Activated naive CD4-positive, alpha-beta T cell treated with anti-CD3 and anti-CD28 coated beads for 36 hours (primary cell): ENCODE measurements at regions of chr11 and their contacts with region 1.

Region 1: DNA sequence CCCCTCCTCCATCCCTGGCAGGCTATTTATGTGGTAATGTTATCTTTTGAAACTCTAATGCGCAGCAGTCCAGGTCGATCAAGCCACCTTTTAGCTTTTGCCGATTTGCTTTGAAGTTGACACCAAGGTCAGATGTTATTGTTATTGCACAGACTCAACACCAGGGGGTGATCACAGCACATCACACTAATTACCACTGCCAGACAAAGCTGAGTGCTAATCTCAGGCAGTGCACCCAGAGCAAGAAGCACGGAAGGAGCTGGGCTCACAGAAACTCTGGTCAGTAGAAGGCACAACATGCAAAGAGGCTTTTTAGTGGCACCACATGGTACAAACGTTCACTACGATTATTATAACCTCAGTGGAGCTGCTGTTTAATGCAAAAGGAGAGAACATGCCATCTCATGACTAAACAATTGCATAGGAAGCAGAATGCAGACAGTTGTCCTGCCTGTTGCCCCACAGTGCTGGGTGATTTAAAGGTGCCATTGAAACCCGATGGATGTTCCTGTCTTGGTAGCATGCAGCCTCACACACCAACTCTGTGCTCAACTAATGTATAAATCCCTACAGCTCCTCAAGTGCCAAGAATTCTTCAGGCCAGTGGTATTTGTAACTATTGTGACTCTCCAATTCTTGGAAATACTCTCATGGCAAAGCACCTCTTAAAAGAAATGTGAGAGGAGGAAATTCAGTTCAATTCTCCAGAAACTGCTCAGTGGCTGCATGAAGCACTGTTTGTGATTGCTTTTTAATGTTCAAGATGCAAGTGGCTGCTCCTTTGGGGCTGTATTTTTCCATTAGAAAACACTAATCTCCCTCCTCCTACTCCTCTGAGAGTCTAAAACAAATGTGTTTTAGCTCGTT is 353.9 kb upstream of the DDI1 start:
- DNase-seq: peak; percentile 57
- H3K4me3 Mint-ChIP-seq: no peak overlapping the region
- H3K27ac Mint-ChIP-seq: no peak overlapping the region
- H3K4me1 Mint-ChIP-seq: peaks cover 2% of the 10 kb centered on the region
- H3K27me3 Mint-ChIP-seq: no peaks in the 10 kb centered on the region

Region 2: GRCh38 chr11:104151404-104152204 is 469.1 kb after region 1 on chr11:
- CTCF ChIA-PET with region 1: no interaction called
- intact Hi-C with region 1: loop called (anchors 1 kb)
- DNase-seq: no peak
- H3K4me3 Mint-ChIP-seq: no peak overlapping the region
- H3K27ac Mint-ChIP-seq: no peak overlapping the region
- H3K4me1 Mint-ChIP-seq: no peaks in the 10 kb centered on the region
- H3K27me3 Mint-ChIP-seq: no peaks in the 10 kb centered on the region

Region 3: DNA sequence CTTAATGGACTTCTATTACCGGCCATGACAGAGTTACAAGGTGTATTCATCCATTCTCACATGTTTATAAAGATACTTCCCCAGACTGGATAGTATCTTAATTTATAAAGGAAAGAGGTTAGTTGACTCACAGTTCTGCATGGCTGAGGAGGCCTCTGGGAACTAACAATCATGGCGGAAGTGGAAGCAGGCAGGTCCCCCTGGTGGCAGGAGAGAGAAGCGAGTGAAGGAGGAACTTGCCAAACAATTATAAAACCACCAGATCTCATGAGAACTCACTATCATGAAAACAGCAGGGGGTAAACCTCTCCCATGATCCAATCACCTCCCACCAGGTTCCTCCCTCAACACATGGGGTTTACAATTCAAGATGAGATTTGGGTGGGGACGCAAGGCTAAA is 651.4 kb after region 1 on chr11:
- CTCF ChIA-PET with region 1: no interaction called
- intact Hi-C with region 1: loop called (anchors 5 kb)
- DNase-seq: peak; percentile 12
- H3K4me3 Mint-ChIP-seq: no peak overlapping the region
- H3K27ac Mint-ChIP-seq: no peak overlapping the region
- H3K4me1 Mint-ChIP-seq: no peaks in the 10 kb centered on the region
- H3K27me3 Mint-ChIP-seq: no peaks in the 10 kb centered on the region

Region 4: GRCh38 chr11:104609311-104610085 is 926.9 kb after region 1 on chr11:
- CTCF ChIA-PET with region 1: interaction called, 3 read pairs
- intact Hi-C with region 1: loop called (anchors 5 kb)
- DNase-seq: peak; percentile 35
- H3K4me3 Mint-ChIP-seq: no peak overlapping the region
- H3K27ac Mint-ChIP-seq: no peak overlapping the region
- H3K4me1 Mint-ChIP-seq: peaks cover 13% of the 10 kb centered on the region
- H3K27me3 Mint-ChIP-seq: no peaks in the 10 kb centered on the region